ENCODE measurements at regions of chrX and their contacts with region 1.

Region 1: GRCh38 chrX:97096385-97096784 is 212.7 kb downstream of the RPA4 start:
- DNase-seq: no peak
- H3K4me3 Mint-ChIP-seq: no peak overlapping the region
- H3K27ac Mint-ChIP-seq: no peak overlapping the region
- H3K4me1 Mint-ChIP-seq: no peaks in the 10 kb centered on the region
- H3K27me3 Mint-ChIP-seq: no peaks in the 10 kb centered on the region

Region 2: GRCh38 chrX:96994093-96994492 is 102.3 kb before region 1 on chrX:
- intact Hi-C with region 1: no loop called
- DNase-seq: no peak
- H3K4me3 Mint-ChIP-seq: no peak overlapping the region
- H3K27ac Mint-ChIP-seq: no peak overlapping the region
- H3K4me1 Mint-ChIP-seq: no peaks in the 10 kb centered on the region
- H3K27me3 Mint-ChIP-seq: no peaks in the 10 kb centered on the region

Region 3: DNA sequence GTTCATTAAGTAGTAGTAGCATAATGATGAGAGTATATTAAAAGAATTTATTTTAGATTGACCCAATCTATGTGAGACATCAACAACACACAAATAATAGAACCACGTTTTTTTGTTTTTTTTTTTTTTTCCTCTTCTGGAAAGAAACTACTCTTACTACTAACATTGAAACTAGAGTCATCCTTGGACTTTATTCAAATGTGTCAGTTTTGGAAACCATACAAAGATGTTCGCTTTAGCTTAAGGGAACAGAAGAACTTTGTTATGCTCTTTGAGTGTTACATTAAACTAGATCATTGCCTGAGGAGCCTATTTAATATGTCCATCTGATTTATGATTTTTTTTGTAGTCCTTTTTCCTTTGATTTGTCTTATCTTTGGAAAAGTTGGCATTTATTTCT is 46.0 kb before region 1 on chrX:
- intact Hi-C with region 1: no loop called
- DNase-seq: no peak
- H3K4me3 Mint-ChIP-seq: no peak overlapping the region
- H3K27ac Mint-ChIP-seq: no peak overlapping the region
- H3K4me1 Mint-ChIP-seq: peaks cover 2% of the 10 kb centered on the region
- H3K27me3 Mint-ChIP-seq: no peaks in the 10 kb centered on the region

Region 4: GRCh38 chrX:97189661-97190060 is 93.3 kb after region 1 on chrX:
- intact Hi-C with region 1: no loop called
- DNase-seq: no peak
- H3K4me3 Mint-ChIP-seq: no peak overlapping the region
- H3K27ac Mint-ChIP-seq: no peak overlapping the region
- H3K4me1 Mint-ChIP-seq: no peaks in the 10 kb centered on the region
- H3K27me3 Mint-ChIP-seq: no peaks in the 10 kb centered on the region

Region 5: DNA sequence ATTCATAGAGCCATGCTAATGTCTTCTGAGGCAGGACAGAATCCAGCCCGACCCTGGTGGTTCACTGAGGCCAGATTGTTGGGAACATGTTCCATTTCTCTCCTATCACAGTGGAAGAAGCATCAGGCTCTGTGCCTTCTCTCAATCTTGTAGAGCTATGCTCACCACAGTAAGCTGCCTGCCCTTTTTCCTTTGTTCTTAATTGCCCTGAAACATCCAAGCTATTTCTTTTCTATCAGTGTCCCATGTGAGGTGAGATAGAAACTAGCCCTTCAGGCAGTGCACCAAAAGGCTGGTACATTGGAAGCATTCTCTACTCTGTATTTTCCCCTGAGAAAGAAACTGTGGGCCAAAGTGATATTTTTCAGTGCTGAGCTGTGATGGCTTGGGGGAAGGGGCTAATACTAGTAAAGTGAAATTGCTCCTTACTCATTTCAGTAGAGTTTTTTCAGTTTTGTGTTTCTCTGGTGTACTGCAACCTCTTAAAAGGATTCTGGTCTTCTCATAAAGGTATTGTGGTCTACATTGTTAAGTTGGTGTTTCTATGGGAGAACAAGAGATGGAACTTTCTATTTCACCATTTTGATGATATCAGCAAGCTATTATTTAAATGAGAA is 398.5 kb after region 1 on chrX:
- intact Hi-C with region 1: no loop called
- DNase-seq: no peak
- H3K4me3 Mint-ChIP-seq: no peak overlapping the region
- H3K27ac Mint-ChIP-seq: no peak overlapping the region
- H3K4me1 Mint-ChIP-seq: peaks cover 3% of the 10 kb centered on the region
- H3K27me3 Mint-ChIP-seq: no peaks in the 10 kb centered on the region

Region 6: GRCh38 chrX:97616883-97617530 is 520.6 kb after region 1 on chrX:
- intact Hi-C with region 1: loop called (anchors 5 kb)
- DNase-seq: peak; percentile 49
- H3K4me3 Mint-ChIP-seq: no peak overlapping the region
- H3K27ac Mint-ChIP-seq: no peak overlapping the region
- H3K4me1 Mint-ChIP-seq: no peaks in the 10 kb centered on the region
- H3K27me3 Mint-ChIP-seq: no peaks in the 10 kb centered on the region